Esophagus squamous epithelium (tissue), 5 donors: ENCODE measurements at regions of chr15 and their contacts with region 1.

Region 1: GRCh38 chr15:64809649-64810496 is 15.6 kb downstream of the PIF1 start:
- DNase-seq: no peak
- H3K4me3 ChIP-seq: no peak overlapping the region
- H3K27ac ChIP-seq: peak overlapping the region in 2 of 4 donors; percentile 29 to 51
- H3K4me1 ChIP-seq: peaks cover 0 to 21% (median 5%) of the 10 kb centered on the region in 3 donors
- H3K27me3 ChIP-seq: peaks cover 0 to 5% (median 0%) of the 10 kb centered on the region in 4 donors
- CTCF ChIP-seq: peak; percentile 79 to 95 (median 88)
- POLR2A ChIP-seq: no peak

Region 2: GRCh38 chr15:64611085-64611725 is 198.7 kb before region 1 on chr15:
- intact Hi-C with region 1: no loop called
- DNase-seq: no peak
- H3K4me3 ChIP-seq: no peak overlapping the region
- H3K27ac ChIP-seq: no peak overlapping the region
- H3K4me1 ChIP-seq: peaks cover 0 to 20% (median 9%) of the 10 kb centered on the region in 3 donors
- H3K27me3 ChIP-seq: no peaks in the 10 kb centered on the region
- CTCF ChIP-seq: no peak
- POLR2A ChIP-seq: no peak

Region 3: GRCh38 chr15:64740311-64741170 is 69.3 kb before region 1 on chr15:
- intact Hi-C with region 1: loop called (anchors 5 kb)
- DNase-seq: no peak
- H3K4me3 ChIP-seq: peak overlapping the region in 3 of 4 donors; percentile 5 to 22 (median 6)
- H3K27ac ChIP-seq: peak overlapping the region; percentile 44 to 88 (median 78)
- H3K4me1 ChIP-seq: peaks cover 7 to 42% (median 8%) of the 10 kb centered on the region in 3 donors
- H3K27me3 ChIP-seq: no peaks in the 10 kb centered on the region
- CTCF ChIP-seq: peak in 2 of 6 experiments; percentile 36
- POLR2A ChIP-seq: no peak

Region 4: DNA sequence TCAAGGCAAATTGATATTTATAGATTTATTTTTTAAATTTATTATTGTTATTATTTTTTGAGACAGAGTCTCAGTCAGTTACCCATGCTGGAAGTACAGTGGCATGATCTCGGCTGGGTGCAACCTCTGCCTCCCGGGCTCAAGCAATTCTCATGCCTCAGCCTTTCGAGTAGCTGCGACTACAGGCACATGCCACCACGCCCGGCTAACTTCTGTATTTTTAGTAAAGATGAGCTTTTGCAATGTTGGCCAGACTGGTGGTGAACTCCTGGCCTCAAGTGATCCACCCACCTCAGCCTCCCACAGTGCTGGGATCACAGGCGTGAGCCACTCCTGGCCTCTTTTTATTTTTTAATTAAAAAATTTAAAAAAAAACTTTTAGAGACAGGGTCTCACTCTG is 160.8 kb after region 1 on chr15:
- intact Hi-C with region 1: no loop called
- DNase-seq: no peak
- H3K4me3 ChIP-seq: no peak overlapping the region
- H3K27ac ChIP-seq: no peak overlapping the region
- H3K4me1 ChIP-seq: no peaks in the 10 kb centered on the region
- H3K27me3 ChIP-seq: no peaks in the 10 kb centered on the region
- CTCF ChIP-seq: no peak
- POLR2A ChIP-seq: no peak